Cardiac septum (tissue), 1 donor: ENCODE measurements at regions of chr18 and their contacts with region 1.

Region 1: DNA sequence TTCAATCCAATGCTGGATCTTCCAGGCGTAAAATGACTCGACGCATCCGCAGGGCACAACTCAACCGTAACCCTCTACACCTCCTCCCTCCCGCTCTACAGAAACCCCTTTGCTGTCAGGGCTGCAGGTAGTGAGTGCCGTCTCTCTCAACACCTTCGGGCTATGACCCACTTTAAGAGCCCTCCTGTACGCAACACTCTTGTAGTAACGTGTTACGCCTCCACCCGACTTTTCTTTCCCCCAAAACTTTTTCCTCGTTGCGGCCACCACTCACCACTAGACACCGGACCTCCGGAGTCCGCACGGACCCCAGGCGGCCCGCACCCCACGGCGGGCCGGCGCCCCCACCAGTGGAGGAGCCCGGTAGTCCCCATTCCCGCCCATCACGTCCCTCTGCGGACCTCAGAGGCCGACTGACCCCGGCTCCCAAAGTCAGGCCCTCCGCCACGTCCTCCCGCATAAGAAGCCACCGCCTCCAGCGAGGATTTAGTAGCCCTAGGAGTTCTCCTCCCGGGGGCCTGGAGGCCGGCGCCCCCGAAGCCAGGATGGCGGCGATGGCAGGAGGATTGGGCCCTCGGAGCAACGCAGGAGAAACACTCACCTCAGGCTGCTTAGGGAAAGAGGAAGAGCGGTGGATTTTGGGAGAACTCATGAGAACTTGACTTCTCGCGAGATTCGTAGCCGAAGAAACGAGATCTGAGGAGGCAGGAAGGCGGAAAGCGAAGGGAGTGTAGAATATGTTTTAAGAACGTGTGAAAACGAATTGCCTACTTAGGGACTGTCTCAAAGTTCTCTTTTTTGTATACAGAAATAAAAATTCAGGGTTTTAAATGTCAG is 5.0 kb upstream of the C18orf32 start:
- DNase-seq: peak; percentile 93

Region 2: GRCh38 chr18:49274188-49274714 is 217.8 kb before region 1 on chr18:
- intact Hi-C with region 1: no loop called
- DNase-seq: no peak

Region 3: GRCh38 chr18:49459404-49460171 is 32.5 kb before region 1 on chr18:
- intact Hi-C with region 1: loop called (anchors 2 kb)
- DNase-seq: no peak

Region 4: GRCh38 chr18:49697757-49698524 is 205.9 kb after region 1 on chr18:
- intact Hi-C with region 1: no loop called
- DNase-seq: no peak

Region 5: GRCh38 chr18:50287441-50288347 is 795.6 kb after region 1 on chr18 and contains the start of gene CXXC1:
- intact Hi-C with region 1: loop called (anchors 10 kb)
- DNase-seq: peak; percentile 98
- total RNA-seq, gene CXXC1: 33.5 TPM